RWPE1 (cell line): ENCODE measurements at regions of chr10 and their contacts with region 1.

Region 1: DNA sequence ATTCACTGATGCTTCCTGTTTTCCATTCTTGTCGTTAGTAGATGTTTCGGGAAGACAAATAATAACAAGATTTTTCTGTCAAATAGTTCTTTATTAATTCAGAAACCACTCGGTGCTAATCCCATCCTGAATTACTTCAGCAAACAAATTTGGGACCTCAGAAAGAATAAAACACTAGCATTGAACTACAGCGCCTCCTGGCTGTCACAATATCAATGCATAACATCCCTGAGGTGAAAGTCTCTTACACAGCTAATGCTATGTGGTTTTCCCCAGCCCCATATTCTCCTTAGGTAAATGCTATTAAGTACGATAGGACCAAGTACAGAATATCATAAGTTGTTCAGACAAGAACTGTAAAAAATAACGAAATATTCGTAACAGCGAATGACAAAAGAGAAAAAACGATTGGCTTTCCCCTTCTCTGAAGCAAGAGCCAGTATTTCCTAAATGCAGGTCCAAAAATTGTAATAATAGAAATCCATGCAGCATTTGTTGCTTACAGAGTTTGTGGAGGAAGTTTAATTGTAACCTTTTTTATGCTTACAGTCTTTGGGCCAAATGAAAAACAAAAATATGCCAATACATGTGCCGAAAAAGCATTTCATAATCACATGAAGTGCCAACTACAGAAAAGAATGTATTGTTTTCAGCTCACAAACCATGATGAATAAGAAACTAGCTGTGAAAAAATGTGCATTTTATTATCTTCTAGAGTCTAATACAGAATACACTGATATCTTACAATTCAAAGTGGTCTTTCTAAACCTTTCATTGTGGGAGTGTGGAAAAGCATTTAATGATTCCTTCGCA is 47.3 kb downstream of the MYPN start:
- DNase-seq: peak; percentile 19
- H3K27ac ChIP-seq: no peak overlapping the region
- CTCF ChIP-seq: no peak; the same call in 1 of the 2 replicates

Region 2: DNA sequence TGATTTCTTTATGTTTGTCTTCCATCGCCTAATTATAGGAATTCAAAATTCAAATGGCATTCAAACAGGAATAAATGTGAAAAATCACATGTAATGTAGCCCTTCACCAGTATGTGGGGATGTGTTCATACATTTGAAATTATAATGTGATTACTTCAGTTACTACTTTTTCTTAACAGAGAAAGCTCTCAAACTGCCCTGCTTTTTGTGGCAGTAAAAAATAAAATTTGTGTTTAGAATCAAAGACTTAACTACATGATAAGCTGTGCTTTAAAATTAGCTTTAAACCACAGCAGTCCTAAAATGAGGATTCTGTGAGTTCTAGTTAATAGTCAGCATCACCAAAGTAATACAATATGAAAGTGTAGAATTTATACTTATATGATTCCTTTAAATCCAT is 73.7 kb before region 1 on chr10:
- CTCF ChIA-PET with region 1: interaction called, 10 read pairs
- POLR2A ChIA-PET with region 1: no interaction called
- DNase-seq: peak; percentile 56
- H3K27ac ChIP-seq: no peak overlapping the region
- CTCF ChIP-seq: peak; percentile 56